ENCODE measurements at regions of chr1 and their contacts with region 1.

Region 1: DNA sequence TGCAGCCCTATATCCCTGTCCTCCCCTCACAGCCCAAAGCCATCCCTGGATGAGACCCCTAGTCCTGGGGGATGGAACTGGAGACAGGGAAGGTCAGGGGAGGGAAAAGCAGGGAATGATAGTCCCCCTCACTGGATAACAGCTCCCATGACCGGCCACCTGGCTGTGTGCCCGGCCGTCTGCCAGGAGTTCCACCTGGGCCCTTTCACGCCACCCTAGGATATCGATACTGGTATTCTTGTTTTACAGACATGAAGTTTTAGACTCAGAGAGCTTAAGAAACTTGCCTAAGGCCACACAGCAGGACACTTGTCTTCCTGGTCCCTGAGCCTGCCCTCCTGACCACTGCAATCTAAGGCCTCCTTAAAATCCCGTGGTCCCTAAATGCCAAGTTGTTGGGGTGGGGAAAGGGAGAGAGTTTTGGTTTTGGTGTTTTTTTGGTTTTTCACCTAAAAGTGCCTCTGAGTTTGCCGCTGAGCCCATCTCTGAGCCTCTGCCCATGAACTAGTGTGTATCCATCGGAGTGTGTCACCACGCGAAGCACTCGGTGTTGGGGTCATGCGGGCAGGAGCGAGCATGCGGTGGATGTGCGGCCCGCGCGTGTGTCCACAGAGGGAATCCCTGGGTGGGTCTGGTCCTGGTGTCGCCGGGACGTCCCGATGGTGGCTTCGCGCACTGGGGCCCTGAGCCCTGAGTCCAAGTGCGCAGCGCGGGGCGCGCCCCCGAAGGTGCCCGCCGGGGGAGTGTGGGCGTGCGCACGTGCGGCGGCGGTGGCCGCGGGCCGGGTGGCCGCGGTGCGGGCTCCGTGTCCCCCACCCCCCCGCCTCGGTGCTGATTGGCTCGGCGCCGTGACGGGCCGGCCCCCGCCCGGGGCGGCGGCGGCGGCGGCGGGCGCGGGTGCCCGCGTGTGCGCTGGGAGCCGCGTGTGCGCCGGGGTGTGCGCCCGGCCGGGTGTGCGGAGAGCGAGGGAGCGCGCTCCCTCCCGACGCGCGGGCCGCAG is at the start of gene EPHA8:
- DNase-seq: no peak
- ATAC-seq: no peak
- total RNA-seq, gene EPHA8: not detected

Region 2: DNA sequence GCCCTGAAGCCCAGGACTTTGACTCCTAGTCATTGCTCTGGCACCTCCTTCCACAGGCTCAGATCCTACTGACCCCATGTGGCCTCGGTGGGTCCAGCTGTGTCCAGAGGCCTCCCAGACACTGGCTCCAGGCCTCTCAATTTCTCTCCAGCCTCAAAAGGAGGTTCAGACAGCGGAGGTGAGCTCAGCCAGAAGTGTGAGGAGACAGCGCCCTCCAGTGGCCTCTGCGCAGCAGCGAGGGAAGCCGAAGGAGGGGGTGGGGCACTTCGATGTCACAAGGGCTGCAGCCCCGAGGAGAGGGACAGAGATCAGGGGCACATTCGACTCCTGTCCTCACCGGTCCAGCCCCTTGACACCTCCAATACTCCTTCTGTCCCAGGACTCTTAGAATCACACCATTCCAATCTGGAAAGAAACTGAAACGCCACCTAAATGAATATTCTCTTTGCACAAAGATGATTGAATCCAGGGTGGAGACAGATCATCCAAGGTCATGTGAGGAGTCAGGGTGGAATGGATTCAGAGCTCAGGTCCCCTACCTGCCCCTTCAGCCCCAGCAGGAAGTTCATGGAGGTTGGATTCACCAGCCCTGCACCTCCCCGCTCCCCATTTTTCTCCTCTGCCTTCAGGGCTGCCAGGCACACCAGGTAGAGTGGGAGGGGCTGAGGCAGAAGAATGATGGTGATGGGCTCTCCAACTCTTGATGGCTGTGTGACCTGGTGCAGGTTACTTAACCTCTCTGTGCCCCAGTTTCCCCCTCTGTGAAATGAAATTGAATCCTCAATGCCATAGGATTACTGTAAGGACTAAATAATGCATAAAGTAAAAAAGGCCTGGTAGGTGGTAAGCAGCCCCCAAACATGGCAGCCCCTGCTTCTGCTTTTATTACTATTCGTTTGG is 146.1 kb before region 1 on chr1:
- intact Hi-C with region 1: no loop called
- DNase-seq: peak; percentile 67
- ATAC-seq: peak; percentile 47 to 59

Region 3: DNA sequence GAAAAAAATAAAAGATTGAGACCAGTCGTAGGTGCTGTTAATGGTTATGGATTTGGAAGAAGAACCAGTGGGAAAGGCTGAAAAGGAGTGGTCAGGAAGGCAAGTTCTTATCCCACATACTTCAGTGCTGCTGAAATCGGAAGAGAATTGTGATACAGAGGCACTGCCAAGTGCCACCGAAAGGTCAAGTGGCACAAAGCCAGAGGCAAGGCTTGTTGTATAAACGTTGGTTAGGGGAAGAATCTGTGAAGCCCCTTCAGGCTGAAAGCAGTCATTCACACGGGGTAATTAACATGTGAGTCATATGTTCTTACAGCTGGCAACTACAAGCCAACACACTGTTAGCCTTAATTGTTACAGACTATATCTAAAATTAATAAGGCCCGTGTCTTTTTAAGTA is 62.4 kb before region 1 on chr1:
- intact Hi-C with region 1: no loop called
- DNase-seq: peak; percentile 54
- ATAC-seq: peak; percentile 64 to 75

Region 4: GRCh38 chr1:22876359-22877111 is 313.7 kb after region 1 on chr1:
- intact Hi-C with region 1: loop called in 1 of 2 experiments (anchors 10 kb)
- DNase-seq: peak; percentile 44
- ATAC-seq: peak; percentile 34 to 70